A673 (cell line): ENCODE measurements at regions of chr4 and their contacts with region 1.

Region 1: DNA sequence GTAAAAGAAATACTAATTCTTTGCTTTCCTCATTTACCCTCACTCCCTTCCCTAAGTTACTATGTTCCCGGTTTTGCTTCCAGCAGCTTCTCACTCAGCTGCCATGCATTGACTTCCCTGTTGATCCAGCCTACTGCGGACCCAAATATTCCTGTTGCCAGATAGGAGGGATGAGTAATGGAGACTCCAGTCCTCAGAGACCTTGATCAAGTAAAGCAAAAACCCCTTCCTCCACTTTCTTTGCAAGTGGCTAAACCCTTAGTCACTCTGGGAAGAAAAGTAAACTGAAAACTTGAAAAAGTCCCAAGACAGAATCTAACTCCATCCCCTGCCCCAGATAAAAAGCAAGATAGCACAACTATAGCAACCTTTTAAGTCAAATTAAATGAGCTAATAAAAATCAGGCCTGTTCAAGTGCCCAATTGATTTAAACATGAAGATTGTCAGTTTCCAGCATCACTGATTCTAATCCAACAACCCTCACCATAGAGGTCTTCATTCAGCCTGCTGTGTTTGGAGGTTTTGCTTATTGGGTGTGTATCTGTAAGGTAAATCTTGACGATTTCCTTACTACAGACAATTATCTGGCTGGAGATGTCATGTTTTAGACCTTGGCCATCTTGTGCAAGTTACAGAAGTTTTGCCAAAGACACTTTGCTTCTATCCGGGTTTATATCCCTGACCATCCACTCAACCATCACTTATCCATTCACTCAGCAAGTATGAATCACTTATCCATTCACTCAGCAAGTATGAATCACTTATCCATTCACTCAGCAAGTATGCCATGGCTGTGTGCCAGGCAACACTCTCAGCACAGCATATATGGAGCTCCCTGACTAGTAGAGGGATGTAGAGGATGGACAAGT is 17.6 kb downstream of the FGFBP1 start:
- DNase-seq: peak; percentile 84
- H3K4me3 ChIP-seq: no peak overlapping the region
- H3K27ac ChIP-seq: no peak overlapping the region
- H3K4me1 ChIP-seq: no peaks in the 10 kb centered on the region
- H3K27me3 ChIP-seq: no peaks in the 10 kb centered on the region
- CTCF ChIP-seq: no peak

Region 2: DNA sequence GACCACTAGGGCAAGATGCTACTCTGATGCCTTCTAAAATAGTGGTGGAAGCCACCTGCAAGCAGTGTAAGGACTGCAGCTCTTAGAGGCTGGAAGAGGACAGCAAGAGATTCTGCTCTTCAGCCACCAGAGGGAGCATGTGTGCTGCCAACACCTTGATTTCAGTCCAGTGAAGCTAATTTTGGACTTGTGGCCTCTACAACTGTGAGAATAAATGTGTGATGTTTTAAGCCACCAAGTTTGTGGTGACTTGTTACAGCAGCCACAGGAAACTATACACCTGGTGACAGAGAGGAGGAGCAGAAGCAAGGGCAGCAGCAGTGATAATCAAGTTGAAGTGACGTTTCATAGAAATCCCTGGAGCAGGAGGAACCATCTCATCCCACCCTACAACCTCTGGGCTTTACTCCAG is 38.3 kb before region 1 on chr4:
- CTCF ChIA-PET with region 1: no interaction called
- POLR2A ChIA-PET with region 1: no interaction called
- intact Hi-C with region 1: no loop called
- DNase-seq: peak; percentile 81
- H3K4me3 ChIP-seq: no peak overlapping the region
- H3K27ac ChIP-seq: no peak overlapping the region
- H3K4me1 ChIP-seq: peaks cover 20% of the 10 kb centered on the region
- H3K27me3 ChIP-seq: no peaks in the 10 kb centered on the region
- CTCF ChIP-seq: peak; percentile 93

Region 3: GRCh38 chr4:15894921-15895916 is 25.7 kb before region 1 on chr4:
- CTCF ChIA-PET with region 1: no interaction called
- POLR2A ChIA-PET with region 1: interaction called, 18 read pairs
- intact Hi-C with region 1: no loop called
- DNase-seq: no peak
- H3K4me3 ChIP-seq: no peak overlapping the region
- H3K27ac ChIP-seq: no peak overlapping the region
- H3K4me1 ChIP-seq: peaks cover 23% of the 10 kb centered on the region
- H3K27me3 ChIP-seq: no peaks in the 10 kb centered on the region
- CTCF ChIP-seq: no peak

Region 4: GRCh38 chr4:16196478-16197393 is 275.8 kb after region 1 on chr4:
- CTCF ChIA-PET with region 1: no interaction called
- POLR2A ChIA-PET with region 1: no interaction called
- intact Hi-C with region 1: no loop called
- DNase-seq: peak; percentile 92
- H3K4me3 ChIP-seq: peak overlapping the region; percentile 24
- H3K27ac ChIP-seq: peak overlapping the region; percentile 47
- H3K4me1 ChIP-seq: peaks cover 60% of the 10 kb centered on the region
- H3K27me3 ChIP-seq: no peaks in the 10 kb centered on the region
- CTCF ChIP-seq: peak; percentile 66